SK-N-SH (cell line): ENCODE measurements at regions of chr2 and their contacts with region 1.

Region 1: DNA sequence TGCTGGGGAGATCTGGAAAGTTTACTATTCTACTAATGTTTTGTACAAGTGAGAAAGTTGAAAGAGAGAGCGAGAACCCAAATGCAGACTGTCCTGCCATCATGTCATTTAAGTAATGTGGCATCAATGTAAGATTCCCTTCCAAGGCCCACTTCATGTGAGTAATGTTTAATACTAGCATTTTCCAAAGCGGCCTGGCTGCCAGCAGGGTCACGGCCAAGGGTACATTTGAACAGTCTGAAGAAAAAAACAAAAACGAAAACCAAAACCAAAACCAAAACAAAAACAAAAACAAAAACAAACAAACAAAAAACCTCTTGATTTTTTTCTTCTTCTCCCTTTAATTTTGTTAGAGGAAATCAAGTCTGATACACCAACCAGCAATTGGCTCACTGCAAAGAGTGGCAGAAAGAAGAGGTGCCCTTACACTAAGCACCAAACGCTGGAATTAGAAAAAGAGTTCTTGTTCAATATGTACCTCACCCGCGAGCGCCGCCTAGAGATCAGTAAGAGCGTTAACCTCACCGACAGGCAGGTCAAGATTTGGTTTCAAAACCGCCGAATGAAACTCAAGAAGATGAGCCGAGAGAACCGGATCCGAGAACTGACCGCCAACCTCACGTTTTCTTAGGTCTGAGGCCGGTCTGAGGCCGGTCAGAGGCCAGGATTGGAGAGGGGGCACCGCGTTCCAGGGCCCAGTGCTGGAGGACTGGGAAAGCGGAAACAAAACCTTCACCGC is 2.2 kb downstream of the HOXD10 start:
- DNase-seq: peak; percentile 66
- H3K4me3 ChIP-seq: no peak overlapping the region
- H3K27ac ChIP-seq: no peak overlapping the region
- H3K4me1 ChIP-seq: peaks cover 0 to 17% of the 10 kb centered on the region in 2 experiments; a peak in 1 of 4 replicates
- H3K27me3 ChIP-seq: peaks cover 40% of the 10 kb centered on the region
- CTCF ChIP-seq: peak; percentile 66
- EP300 ChIP-seq: no peak
- RAD21 ChIP-seq: peak; percentile 41

Region 2: DNA sequence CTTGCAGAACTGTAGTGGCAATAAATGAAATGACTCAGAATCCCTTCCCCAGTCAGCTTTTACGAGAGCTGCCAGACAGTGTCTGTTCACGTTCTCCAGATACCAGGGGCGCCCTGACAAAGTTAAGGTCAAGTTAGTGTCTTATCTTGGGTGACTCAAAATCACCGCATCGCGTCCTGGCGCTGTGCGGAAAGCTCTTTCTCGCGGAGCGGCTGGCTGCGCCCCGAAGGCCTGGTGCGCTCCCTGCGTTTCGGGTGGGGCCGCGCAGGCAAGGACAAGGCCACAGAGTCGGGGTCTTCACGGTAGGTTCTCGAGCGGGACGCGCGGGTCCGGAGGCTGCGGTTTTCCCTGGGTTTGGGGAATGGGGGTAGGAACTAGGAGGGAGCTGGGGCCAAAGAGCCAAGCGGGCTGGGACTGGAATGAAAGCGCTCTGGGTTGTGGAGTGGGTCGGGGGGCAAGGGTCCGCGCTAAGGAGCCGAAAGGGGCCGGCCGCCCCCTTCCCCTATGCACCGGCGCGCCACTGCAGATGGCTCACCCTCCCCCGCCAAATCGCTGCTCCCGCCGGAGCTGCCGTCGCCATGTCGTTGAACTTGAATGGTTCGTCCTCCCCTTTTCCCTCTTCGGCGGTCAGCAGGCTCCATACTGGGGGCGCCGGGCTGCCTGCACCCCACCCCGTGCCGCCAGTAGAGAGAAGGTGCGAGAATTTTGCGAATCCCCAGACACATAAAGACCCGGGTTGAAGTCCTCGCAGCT is 14.3 kb before region 1 on chr2:
- CTCF ChIA-PET with region 1: interaction called, 264 read pairs
- POLR2A ChIA-PET with region 1: interaction called, 3 read pairs
- DNase-seq: no peak
- H3K4me3 ChIP-seq: peak overlapping the region; percentile 32 to 54
- H3K27ac ChIP-seq: no peak overlapping the region
- H3K4me1 ChIP-seq: peaks cover 0 to 13% of the 10 kb centered on the region in 2 experiments; a peak in 2 of 4 replicates
- H3K27me3 ChIP-seq: peaks cover 86% of the 10 kb centered on the region
- CTCF ChIP-seq: peak; percentile 19; the same call in 1 of the 2 replicates
- EP300 ChIP-seq: no peak
- RAD21 ChIP-seq: no peak